A549 (cell line): ENCODE measurements at regions of chr17 and their contacts with region 1.

Region 1: GRCh38 chr17:19672009-19672750 is 23.6 kb downstream of the ALDH3A2 start:
- DNase-seq: no peak
- ATAC-seq: peak; percentile 41 to 67
- H3K4me3 ChIP-seq: no peak overlapping the region
- H3K27ac ChIP-seq: peak overlapping the region in 1 of 2 experiments; percentile 39; a peak in 3 of 6 replicates
- H3K4me1 ChIP-seq: peaks cover 20% of the 10 kb centered on the region
- CTCF ChIP-seq: peak; percentile 8; the same call in 1 of the 3 replicates
- EP300 ChIP-seq: no peak
- POLR2A ChIP-seq: no peak
- RAD21 ChIP-seq: peak in 1 of 2 experiments; percentile 34; a peak in 2 of 5 replicates

Region 2: DNA sequence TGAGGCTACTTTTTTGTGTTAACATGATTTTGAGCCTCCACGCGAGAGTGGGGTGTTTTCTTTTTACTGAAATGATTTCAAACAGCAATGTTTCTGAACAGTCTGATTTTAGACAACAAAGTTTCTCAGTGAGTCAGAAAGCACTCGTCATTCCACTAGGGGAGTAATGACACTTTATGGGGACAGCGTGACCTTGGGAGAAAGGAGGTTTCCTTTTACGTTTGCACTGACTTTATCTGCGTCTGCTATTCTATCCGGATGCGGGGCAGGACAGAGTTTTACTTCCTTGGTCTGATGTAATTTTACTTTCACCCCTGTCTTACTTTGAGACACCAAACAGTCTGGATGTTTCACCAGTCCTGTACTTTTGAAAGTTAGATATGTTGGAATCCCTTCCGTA is 117.8 kb before region 1 on chr17:
- CTCF ChIA-PET with region 1: no interaction called
- POLR2A ChIA-PET with region 1: no interaction called
- DNase-seq: no peak
- ATAC-seq: no peak
- H3K4me3 ChIP-seq: no peak overlapping the region
- H3K27ac ChIP-seq: no peak overlapping the region
- H3K4me1 ChIP-seq: no peaks in the 10 kb centered on the region
- CTCF ChIP-seq: no peak
- EP300 ChIP-seq: no peak
- POLR2A ChIP-seq: no peak
- RAD21 ChIP-seq: no peak

Region 3: DNA sequence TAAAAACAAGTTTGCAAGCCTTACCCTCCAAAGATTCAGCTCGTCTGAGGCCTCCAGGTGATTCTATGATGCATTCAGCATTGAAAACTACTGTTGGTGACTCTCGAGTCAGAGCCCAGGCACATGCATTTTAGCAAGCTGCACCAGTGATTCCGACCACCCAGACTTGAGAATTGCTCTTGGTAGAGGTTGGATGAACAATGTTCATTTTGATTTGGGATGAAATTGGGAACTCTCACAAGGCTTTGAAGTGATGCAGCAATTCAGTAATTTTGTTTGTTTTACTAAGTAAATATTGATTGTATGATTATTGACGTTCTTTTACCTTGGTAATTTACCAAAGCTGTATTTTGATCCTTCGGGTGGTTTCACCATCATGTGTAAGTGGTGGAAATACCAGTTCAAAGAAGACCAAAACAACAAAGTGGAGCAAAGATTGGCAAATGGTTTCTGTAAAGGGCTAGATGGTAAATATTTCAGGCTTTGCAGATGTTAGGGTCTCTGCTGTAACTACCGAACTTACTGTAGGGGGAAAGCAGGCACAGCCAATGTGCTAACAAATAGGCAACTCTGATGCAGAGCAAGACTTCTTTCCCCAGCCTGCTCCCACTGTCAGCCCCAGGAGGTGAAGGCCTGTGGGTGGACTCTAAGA is 11.8 kb before region 1 on chr17:
- CTCF ChIA-PET with region 1: interaction called, 15 read pairs
- POLR2A ChIA-PET with region 1: no interaction called
- DNase-seq: no peak
- ATAC-seq: peak; percentile 21 to 37; a peak in 1 of 6 replicates
- H3K4me3 ChIP-seq: no peak overlapping the region
- H3K27ac ChIP-seq: peak overlapping the region in 1 of 2 experiments; percentile 29; a peak in 3 of 6 replicates
- H3K4me1 ChIP-seq: peaks cover 29% of the 10 kb centered on the region
- CTCF ChIP-seq: no peak
- EP300 ChIP-seq: no peak
- POLR2A ChIP-seq: no peak
- RAD21 ChIP-seq: no peak

Region 4: GRCh38 chr17:19787733-19788357 is 115.7 kb after region 1 on chr17:
- CTCF ChIA-PET with region 1: no interaction called
- POLR2A ChIA-PET with region 1: no interaction called
- DNase-seq: no peak
- ATAC-seq: no peak; a peak in 1 of 6 replicates
- H3K4me3 ChIP-seq: no peak overlapping the region
- H3K27ac ChIP-seq: no peak overlapping the region
- H3K4me1 ChIP-seq: no peaks in the 10 kb centered on the region
- CTCF ChIP-seq: no peak
- EP300 ChIP-seq: no peak
- POLR2A ChIP-seq: no peak
- RAD21 ChIP-seq: no peak